IMR-90 (cell line): ENCODE measurements at regions of chr2 and their contacts with region 1.

Region 1: GRCh38 chr2:9972621-9973479 is 21.4 kb downstream of the GRHL1 start:
- DNase-seq: peak; percentile 74
- ATAC-seq: no peak
- H3K4me3 ChIP-seq: no peak overlapping the region
- H3K27ac ChIP-seq: no peak overlapping the region
- H3K4me1 ChIP-seq: peaks cover 37% of the 10 kb centered on the region
- H3K27me3 ChIP-seq: no peaks in the 10 kb centered on the region
- CTCF ChIP-seq: no peak
- POLR2A ChIP-seq: no peak
- RAD21 ChIP-seq: no peak

Region 2: DNA sequence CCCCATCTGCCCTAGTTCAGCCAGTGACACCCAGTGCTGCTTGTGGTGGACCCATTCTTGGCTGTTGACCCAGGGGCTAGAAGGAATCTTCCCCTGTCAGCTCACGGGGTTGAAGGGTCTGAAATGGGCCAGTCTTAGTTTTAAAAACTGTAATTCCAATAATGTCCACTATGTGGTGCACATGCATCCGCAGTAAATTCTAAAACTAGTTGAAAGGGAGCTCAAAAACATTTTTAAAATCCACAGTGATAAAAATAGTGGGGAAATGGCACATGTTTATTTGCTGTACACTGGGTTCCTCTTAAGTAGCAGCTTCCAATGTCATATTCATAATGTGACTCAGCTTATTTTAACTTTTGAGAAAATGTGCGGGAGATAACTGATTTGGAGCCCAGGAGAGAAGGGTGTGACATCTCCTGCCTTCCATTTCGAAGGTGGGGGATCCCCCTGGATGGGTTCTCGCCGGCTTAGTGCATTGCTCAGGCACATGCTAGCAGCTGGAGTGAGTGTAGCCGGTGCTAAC is 11.4 kb after region 1 on chr2:
- CTCF ChIA-PET with region 1: interaction called, 14 read pairs
- POLR2A ChIA-PET with region 1: no interaction called
- dilution Hi-C with region 1: no loop called
- in situ Hi-C with region 1: no loop called
- intact Hi-C with region 1: no loop called
- DNase-seq: peak; percentile 48
- ATAC-seq: peak; percentile 69
- H3K4me3 ChIP-seq: no peak overlapping the region
- H3K27ac ChIP-seq: no peak overlapping the region
- H3K4me1 ChIP-seq: peaks cover 12% of the 10 kb centered on the region
- H3K27me3 ChIP-seq: no peaks in the 10 kb centered on the region
- CTCF ChIP-seq: peak; percentile 64
- POLR2A ChIP-seq: no peak
- RAD21 ChIP-seq: peak; percentile 63